OCI-LY7 (cell line): ENCODE measurements at regions of chr18 and their contacts with region 1.

Region 1: DNA sequence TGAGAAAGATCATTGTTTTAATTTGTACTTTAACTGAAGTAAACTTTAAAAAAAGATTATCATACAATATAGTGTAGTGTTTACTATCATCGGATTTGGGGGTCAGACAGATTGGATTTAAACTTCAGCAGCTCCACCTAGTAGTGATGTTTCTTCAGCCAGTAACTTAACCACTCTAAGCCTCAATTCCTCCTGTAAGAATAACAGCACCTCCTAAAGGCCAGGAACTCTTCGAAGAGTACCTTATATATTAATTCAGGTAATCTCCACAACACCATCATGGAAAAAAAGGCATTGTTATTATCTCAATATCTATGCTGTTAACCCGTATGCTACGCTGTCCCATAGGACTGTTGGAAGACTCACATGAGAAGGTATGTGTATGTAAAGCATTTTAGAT is 69.0 kb upstream of the DLGAP1 start:
- DNase-seq: no peak
- H3K4me3 ChIP-seq: no peak overlapping the region
- H3K27ac ChIP-seq: no peak overlapping the region
- H3K4me1 ChIP-seq: no peaks in the 10 kb centered on the region
- CTCF ChIP-seq: no peak

Region 2: DNA sequence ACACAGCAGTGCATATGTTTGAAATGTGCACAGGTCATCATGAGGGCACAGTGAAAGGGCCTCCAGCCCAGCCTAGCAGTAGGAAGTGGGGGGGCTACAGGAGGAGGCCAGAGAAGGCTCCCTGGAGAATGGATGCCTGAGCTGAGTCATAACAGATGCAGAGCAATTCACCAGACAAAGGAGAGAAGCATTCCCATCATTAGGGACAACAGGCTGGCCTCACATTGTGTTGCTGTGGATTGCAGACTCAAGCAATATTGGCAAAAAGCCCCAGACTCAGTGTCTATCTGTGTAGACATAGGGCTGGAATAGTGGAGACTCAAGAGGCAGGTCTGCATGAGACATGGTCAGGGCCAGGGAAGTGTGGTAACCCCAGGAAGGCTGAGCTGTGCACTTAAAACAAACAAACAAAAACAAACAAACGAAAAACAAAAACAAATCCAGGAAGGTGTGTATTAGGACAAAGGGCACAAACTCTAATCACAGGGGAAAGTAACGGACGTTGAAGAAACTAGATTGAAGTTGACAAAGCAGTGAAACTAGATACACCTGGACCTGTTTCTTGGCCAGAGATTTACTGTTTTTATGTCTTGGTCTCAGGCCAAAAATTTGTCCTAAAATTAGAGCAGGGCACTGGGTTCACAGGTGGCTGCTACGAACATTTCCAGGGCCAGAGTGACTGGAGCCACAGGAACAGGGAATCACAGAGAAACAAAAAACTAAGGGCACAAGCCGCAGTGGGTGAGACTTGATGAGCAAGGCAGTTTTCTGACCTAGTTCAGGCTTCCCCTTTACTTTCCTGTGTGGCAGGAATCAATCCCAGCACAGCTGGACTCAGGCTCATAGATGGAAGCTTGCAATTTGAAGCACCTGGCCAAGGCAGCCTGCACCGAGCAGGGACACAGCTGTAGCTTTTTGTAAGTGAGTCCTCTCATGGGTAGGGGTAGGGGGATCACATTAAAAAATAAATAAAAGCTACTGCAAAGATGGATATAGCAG is 398.6 kb before region 1 on chr18:
- CTCF ChIA-PET with region 1: no interaction called
- POLR2A ChIA-PET with region 1: no interaction called
- intact Hi-C with region 1: loop called (anchors 10 kb)
- DNase-seq: no peak
- H3K4me3 ChIP-seq: no peak overlapping the region
- H3K27ac ChIP-seq: no peak overlapping the region
- H3K4me1 ChIP-seq: no peaks in the 10 kb centered on the region
- CTCF ChIP-seq: no peak

Region 3: GRCh38 chr18:4587204-4587603 is 63.1 kb after region 1 on chr18:
- CTCF ChIA-PET with region 1: no interaction called
- POLR2A ChIA-PET with region 1: no interaction called
- intact Hi-C with region 1: loop called (anchors 10 kb)
- DNase-seq: no peak
- H3K4me3 ChIP-seq: no peak overlapping the region
- H3K27ac ChIP-seq: no peak overlapping the region
- H3K4me1 ChIP-seq: no peaks in the 10 kb centered on the region
- CTCF ChIP-seq: no peak

Region 4: DNA sequence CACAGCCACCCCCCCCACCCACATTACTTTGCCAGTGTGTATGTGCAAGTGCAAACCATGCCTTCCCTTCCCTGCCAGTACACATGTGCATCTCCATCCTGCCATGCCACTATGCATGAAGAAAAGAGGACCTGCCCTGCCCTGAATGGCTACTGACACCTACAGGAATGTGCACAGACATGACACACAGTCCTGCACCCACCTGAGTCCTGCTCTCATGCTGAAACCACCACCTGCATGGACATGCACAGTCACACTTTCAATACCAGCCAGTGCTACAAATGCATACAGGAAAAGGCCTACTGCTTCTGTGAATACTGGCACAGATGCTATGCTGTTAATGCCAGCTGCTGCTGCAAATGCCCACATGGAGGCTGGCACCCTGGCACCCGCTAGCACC is 265.4 kb after region 1 on chr18:
- CTCF ChIA-PET with region 1: no interaction called
- POLR2A ChIA-PET with region 1: no interaction called
- intact Hi-C with region 1: loop called (anchors 10 kb)
- DNase-seq: peak; percentile 69
- H3K4me3 ChIP-seq: no peak overlapping the region
- H3K27ac ChIP-seq: no peak overlapping the region
- H3K4me1 ChIP-seq: peaks cover 9% of the 10 kb centered on the region
- CTCF ChIP-seq: peak; percentile 37; the same call in 1 of the 2 replicates